ENCODE measurements at regions of chr9 and their contacts with region 1.

Region 1: GRCh38 chr9:123102375-123103110 is 69.1 kb downstream of the GPR21 start:
- DNase-seq: no peak
- ATAC-seq: no peak
- H3K4me3 ChIP-seq: no peak overlapping the region
- H3K4me3 Mint-ChIP-seq: no peak overlapping the region
- H3K27ac ChIP-seq: no peak overlapping the region
- H3K27ac Mint-ChIP-seq: peak overlapping the region; percentile 43
- H3K4me1 ChIP-seq: no peaks in the 10 kb centered on the region
- H3K4me1 Mint-ChIP-seq: no peaks in the 10 kb centered on the region
- H3K27me3 ChIP-seq: no peaks in the 10 kb centered on the region
- H3K27me3 Mint-ChIP-seq: no peaks in the 10 kb centered on the region
- CTCF ChIP-seq: no peak

Region 2: DNA sequence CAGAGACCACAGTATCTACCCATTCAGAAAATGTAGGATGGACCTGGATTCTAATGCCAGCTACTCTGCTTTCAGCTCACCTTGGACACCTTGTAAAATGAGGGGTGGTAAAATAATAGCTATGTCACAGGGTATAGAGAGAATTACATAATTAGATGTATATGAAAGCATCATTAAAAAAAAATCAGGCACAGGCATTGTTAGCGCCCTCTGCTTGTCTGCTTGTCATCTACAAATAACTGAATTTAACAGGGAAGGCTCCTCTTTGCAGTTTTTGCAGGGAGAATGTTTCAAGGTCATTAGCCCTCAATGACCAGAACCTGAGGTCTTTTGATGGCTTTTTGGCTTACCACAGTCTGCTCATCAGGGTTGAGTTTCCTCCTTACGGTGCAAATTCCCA is 11.1 kb before region 1 on chr9:
- CTCF ChIA-PET with region 1: interaction called, 17 read pairs
- POLR2A ChIA-PET with region 1: no interaction called
- intact Hi-C with region 1: no loop called
- DNase-seq: no peak
- ATAC-seq: no peak
- H3K4me3 ChIP-seq: no peak overlapping the region
- H3K4me3 Mint-ChIP-seq: no peak overlapping the region
- H3K27ac ChIP-seq: no peak overlapping the region
- H3K27ac Mint-ChIP-seq: no peak overlapping the region
- H3K4me1 ChIP-seq: no peaks in the 10 kb centered on the region
- H3K4me1 Mint-ChIP-seq: no peaks in the 10 kb centered on the region
- H3K27me3 ChIP-seq: no peaks in the 10 kb centered on the region
- H3K27me3 Mint-ChIP-seq: no peaks in the 10 kb centered on the region
- CTCF ChIP-seq: no peak